ENCODE measurements at regions of chr2 and their contacts with region 1.

Region 1: GRCh38 chr2:16656784-16657391 is 8.7 kb downstream of the CYRIA start:
- DNase-seq: peak; percentile 87 to 91
- H3K4me3 ChIP-seq: no peak overlapping the region
- H3K27ac ChIP-seq: peak overlapping the region; percentile 98
- H3K4me1 ChIP-seq: peaks cover 90 to 97% of the 10 kb centered on the region in 2 donors
- H3K27me3 ChIP-seq: no peaks in the 10 kb centered on the region
- CTCF ChIP-seq: no peak
- POLR2A ChIP-seq: peak in 1 of 2 donors; percentile 74

Region 2: DNA sequence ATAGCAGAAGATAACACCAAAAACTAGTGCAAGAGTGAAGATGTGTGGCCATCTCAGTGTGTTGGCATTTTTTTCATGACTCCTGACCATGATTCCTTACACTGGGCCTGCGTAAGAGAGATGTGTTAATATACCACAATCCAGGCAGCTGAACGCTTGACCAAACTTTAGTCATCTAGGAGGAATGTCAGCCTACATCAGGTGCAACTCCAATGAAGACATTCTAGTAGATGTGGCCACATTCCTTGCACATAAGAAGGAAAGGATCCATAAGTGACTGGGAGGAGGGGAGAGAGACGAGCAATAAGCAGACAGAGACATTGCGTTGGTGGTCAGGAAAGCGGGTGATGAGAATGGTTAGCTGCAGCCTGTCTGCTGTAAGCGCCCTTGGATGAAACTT is 33.9 kb before region 1 on chr2:
- intact Hi-C with region 1: loop called (anchors 5 kb)
- DNase-seq: no peak
- H3K4me3 ChIP-seq: no peak overlapping the region
- H3K27ac ChIP-seq: peak overlapping the region; percentile 84 to 90 (median 86)
- H3K4me1 ChIP-seq: peaks cover 82 to 100% of the 10 kb centered on the region in 2 donors
- H3K27me3 ChIP-seq: no peaks in the 10 kb centered on the region
- CTCF ChIP-seq: no peak
- POLR2A ChIP-seq: no peak

Region 3: DNA sequence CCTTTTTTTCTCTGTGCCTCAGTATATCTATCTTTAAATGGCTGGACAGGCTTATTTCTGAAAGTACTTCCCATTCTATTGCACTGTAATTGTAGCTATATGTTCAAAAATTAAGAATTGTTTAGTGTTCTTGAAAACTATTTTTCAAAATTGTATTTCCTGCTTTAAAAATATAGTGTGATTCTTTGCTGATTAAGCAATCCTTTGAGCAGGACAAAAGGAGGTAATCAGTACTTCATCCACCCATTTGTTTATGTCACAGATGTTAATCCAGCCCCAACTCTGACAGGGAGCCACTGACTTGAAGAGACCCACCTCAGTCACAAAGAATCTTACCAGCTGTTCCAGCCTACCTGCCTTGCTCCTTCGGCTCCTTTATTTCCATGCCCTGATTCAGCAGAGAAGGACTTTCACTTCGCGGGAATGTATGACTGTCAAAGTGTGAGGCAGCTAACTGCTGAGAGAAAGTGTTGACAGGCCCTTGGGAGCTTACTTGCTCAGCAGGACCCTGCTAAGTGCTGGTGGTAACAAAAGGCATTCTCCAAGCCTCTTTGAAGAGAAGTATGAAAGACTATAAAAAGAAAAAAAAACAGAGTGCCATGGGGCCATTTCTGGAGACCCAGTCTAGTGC is 402.0 kb after region 1 on chr2:
- intact Hi-C with region 1: no loop called
- DNase-seq: no peak
- H3K4me3 ChIP-seq: no peak overlapping the region
- H3K27ac ChIP-seq: no peak overlapping the region
- H3K4me1 ChIP-seq: no peaks in the 10 kb centered on the region
- H3K27me3 ChIP-seq: no peaks in the 10 kb centered on the region
- CTCF ChIP-seq: no peak
- POLR2A ChIP-seq: no peak